ENCODE measurements at regions of chr3 and their contacts with region 1.

Region 1: GRCh38 chr3:8094415-8094814 is 407.2 kb upstream of the LMCD1 start:
- DNase-seq: no peak
- H3K4me3 ChIP-seq: no peak overlapping the region
- H3K27ac ChIP-seq: no peak overlapping the region
- H3K4me1 ChIP-seq: no peaks in the 10 kb centered on the region
- H3K27me3 ChIP-seq: no peaks in the 10 kb centered on the region
- CTCF ChIP-seq: no peak
- POLR2A ChIP-seq: no peak

Region 2: DNA sequence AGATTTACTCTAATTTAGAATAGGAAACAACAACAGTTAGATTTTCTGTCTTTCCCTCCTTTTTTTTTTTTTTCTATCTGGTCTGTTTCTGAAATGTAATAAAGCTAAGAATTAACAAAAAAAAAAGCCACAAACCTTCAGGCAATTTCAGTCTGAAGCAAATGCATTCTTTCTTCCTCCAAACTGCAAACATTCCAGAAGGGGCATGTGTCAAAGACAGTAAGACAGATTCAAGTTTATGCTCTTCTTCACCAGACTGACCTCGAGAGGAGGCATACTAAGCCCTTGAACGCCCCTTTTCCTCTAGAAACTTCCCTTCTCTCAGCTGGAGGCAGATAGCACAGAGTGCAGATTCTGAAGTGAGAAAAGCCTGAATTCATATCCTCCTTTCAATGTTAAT is 247.4 kb before region 1 on chr3:
- intact Hi-C with region 1: loop called (anchors 5 kb)
- DNase-seq: no peak
- H3K4me3 ChIP-seq: no peak overlapping the region
- H3K27ac ChIP-seq: no peak overlapping the region
- H3K4me1 ChIP-seq: no peaks in the 10 kb centered on the region
- H3K27me3 ChIP-seq: no peaks in the 10 kb centered on the region
- CTCF ChIP-seq: no peak
- POLR2A ChIP-seq: no peak